GM12878 (cell line): ENCODE measurements at regions of chr17 and their contacts with region 1.

Region 1: DNA sequence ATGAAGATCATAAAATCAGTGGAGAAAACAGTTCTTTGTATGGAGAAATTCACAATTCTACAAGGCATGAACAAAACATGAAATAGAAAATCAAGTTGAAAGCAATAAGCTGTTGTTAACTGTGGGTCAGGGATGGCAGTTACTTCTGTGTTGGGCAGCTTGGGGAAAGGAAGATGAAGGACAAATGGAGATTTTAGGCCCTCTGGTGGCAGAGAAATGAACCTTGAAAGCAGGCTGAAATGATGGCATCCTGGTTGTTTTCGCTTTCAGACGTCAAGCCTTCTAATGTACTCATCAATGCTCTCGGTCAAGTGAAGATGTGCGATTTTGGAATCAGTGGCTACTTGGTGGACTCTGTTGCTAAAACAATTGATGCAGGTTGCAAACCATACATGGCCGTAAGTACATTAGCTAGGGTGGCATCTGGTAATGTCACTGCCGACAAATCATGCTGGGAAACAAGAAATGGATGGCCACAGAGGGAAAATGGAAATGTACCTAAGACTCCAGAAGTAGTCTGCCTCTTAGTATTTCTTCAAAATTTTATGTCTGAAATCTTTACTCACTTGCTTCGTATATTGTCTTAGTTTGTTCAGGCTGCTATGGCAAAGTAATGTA is 108.9 kb downstream of the MAP2K6 start:
- DNase-seq: peak; percentile 55
- ATAC-seq: peak; percentile 91
- H3K4me3 ChIP-seq: no peak overlapping the region
- H3K27ac ChIP-seq: no peak overlapping the region
- H3K4me1 ChIP-seq: peaks cover 10% of the 10 kb centered on the region; the same call in 1 of the 2 replicates
- H3K27me3 ChIP-seq: no peaks in the 10 kb centered on the region
- CTCF ChIP-seq: peak; percentile 73 to 76 (median 74)
- EP300 ChIP-seq: no peak
- POLR2A ChIP-seq: no peak
- RAD21 ChIP-seq: peak; percentile 84

Region 2: GRCh38 chr17:68771867-68772515 is 751.4 kb before region 1 on chr17:
- CTCF ChIA-PET with region 1: no interaction called
- POLR2A ChIA-PET with region 1: no interaction called
- RAD21 ChIA-PET with region 1: interaction called, 3 read pairs
- SMC1A ChIA-PET with region 1: interaction called, 5 read pairs
- in situ Hi-C with region 1: no loop called
- intact Hi-C with region 1: loop called (anchors 10 kb)
- DNase-seq: no peak
- ATAC-seq: peak; percentile 90
- H3K4me3 ChIP-seq: peak overlapping the region; percentile 61
- H3K27ac ChIP-seq: peak overlapping the region; percentile 46
- H3K4me1 ChIP-seq: peaks cover 15% of the 10 kb centered on the region
- H3K27me3 ChIP-seq: no peaks in the 10 kb centered on the region
- CTCF ChIP-seq: peak; percentile 62 to 80 (median 76)
- EP300 ChIP-seq: no peak
- POLR2A ChIP-seq: no peak
- RAD21 ChIP-seq: peak; percentile 81

Region 3: GRCh38 chr17:69358688-69359596 is 164.4 kb before region 1 on chr17:
- CTCF ChIA-PET with region 1: interaction called, 11 read pairs
- POLR2A ChIA-PET with region 1: no interaction called
- RAD21 ChIA-PET with region 1: interaction called, 5 read pairs
- SMC1A ChIA-PET with region 1: interaction called, 3 read pairs
- in situ Hi-C with region 1: no loop called
- intact Hi-C with region 1: no loop called
- DNase-seq: peak; percentile 4
- ATAC-seq: peak; percentile 72
- H3K4me3 ChIP-seq: no peak overlapping the region
- H3K27ac ChIP-seq: no peak overlapping the region
- H3K4me1 ChIP-seq: no peaks in the 10 kb centered on the region
- H3K27me3 ChIP-seq: no peaks in the 10 kb centered on the region
- CTCF ChIP-seq: peak; percentile 42 to 52 (median 46); a peak in 5 of 6 replicates
- EP300 ChIP-seq: no peak
- POLR2A ChIP-seq: no peak
- RAD21 ChIP-seq: peak; percentile 52

Region 4: GRCh38 chr17:69404382-69404781 is 119.0 kb before region 1 on chr17:
- CTCF ChIA-PET with region 1: interaction called, 5 read pairs
- POLR2A ChIA-PET with region 1: no interaction called
- RAD21 ChIA-PET with region 1: interaction called, 5 read pairs
- SMC1A ChIA-PET with region 1: interaction called, 11 read pairs
- in situ Hi-C with region 1: no loop called
- intact Hi-C with region 1: no loop called
- DNase-seq: no peak
- ATAC-seq: no peak
- H3K4me3 ChIP-seq: no peak overlapping the region
- H3K27ac ChIP-seq: no peak overlapping the region
- H3K4me1 ChIP-seq: no peaks in the 10 kb centered on the region
- H3K27me3 ChIP-seq: no peaks in the 10 kb centered on the region
- CTCF ChIP-seq: no peak
- EP300 ChIP-seq: no peak
- POLR2A ChIP-seq: no peak
- RAD21 ChIP-seq: no peak

Region 5: GRCh38 chr17:69501591-69502468 is 21.5 kb before region 1 on chr17:
- CTCF ChIA-PET with region 1: interaction called, 100 read pairs
- POLR2A ChIA-PET with region 1: interaction called, 3 read pairs
- RAD21 ChIA-PET with region 1: interaction called, 4 read pairs
- SMC1A ChIA-PET with region 1: interaction called, 56 read pairs
- in situ Hi-C with region 1: no loop called
- intact Hi-C with region 1: no loop called
- DNase-seq: no peak
- ATAC-seq: peak; percentile 54
- H3K4me3 ChIP-seq: peak overlapping the region; percentile 70
- H3K27ac ChIP-seq: peak overlapping the region; percentile 88
- H3K4me1 ChIP-seq: peaks cover 25% of the 10 kb centered on the region
- H3K27me3 ChIP-seq: no peaks in the 10 kb centered on the region
- CTCF ChIP-seq: 0 out of 6 replicates have a peak, but pooled peaks of 1 of the 3 experiments have one; percentile 8
- EP300 ChIP-seq: 0 out of 4 replicates have a peak, but pooled peaks of 1 of the 2 experiments have one; percentile 18
- POLR2A ChIP-seq: no peak
- RAD21 ChIP-seq: no peak

Region 6: GRCh38 chr17:69533481-69534234 is 10.3 kb after region 1 on chr17:
- CTCF ChIA-PET with region 1: interaction called, 13 read pairs
- POLR2A ChIA-PET with region 1: no interaction called
- RAD21 ChIA-PET with region 1: no interaction called
- SMC1A ChIA-PET with region 1: interaction called, 8 read pairs
- in situ Hi-C with region 1: no loop called
- intact Hi-C with region 1: no loop called
- DNase-seq: no peak
- ATAC-seq: no peak
- H3K4me3 ChIP-seq: no peak overlapping the region
- H3K27ac ChIP-seq: no peak overlapping the region
- H3K4me1 ChIP-seq: no peaks in the 10 kb centered on the region
- H3K27me3 ChIP-seq: no peaks in the 10 kb centered on the region
- CTCF ChIP-seq: no peak
- EP300 ChIP-seq: no peak
- POLR2A ChIP-seq: no peak
- RAD21 ChIP-seq: no peak

Region 7: DNA sequence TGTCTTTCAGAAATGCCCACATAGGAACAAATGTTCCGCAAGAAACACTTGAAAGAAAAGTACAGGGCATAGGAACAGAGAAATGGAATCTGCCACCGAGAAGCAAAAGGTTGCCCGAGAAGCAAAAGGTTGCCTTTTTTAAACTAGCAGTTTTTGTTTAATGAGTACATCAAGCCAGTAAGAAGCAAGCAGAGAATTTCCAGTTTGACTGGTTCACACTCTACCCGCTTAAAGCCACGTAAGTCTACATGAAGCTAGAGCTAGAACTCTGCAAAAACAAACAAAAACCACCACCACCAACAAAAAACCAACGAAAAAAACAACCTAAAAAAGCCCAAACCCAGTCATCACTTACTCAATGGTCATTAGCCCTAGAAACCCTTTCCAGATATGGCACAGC is 35.4 kb after region 1 on chr17:
- CTCF ChIA-PET with region 1: interaction called, 11 read pairs
- POLR2A ChIA-PET with region 1: no interaction called
- RAD21 ChIA-PET with region 1: interaction called, 3 read pairs
- SMC1A ChIA-PET with region 1: interaction called, 3 read pairs
- in situ Hi-C with region 1: no loop called
- intact Hi-C with region 1: no loop called
- DNase-seq: no peak
- ATAC-seq: no peak
- H3K4me3 ChIP-seq: no peak overlapping the region
- H3K27ac ChIP-seq: no peak overlapping the region
- H3K4me1 ChIP-seq: peaks cover 1% of the 10 kb centered on the region; the same call in 1 of the 2 replicates
- H3K27me3 ChIP-seq: no peaks in the 10 kb centered on the region
- CTCF ChIP-seq: no peak
- EP300 ChIP-seq: no peak
- POLR2A ChIP-seq: no peak
- RAD21 ChIP-seq: no peak